Activated T-helper 1 cell treated with anti-CD3 and anti-CD28 coated beads, Interleukin-12 subunit alpha, Interleukin-12 subunit beta, Interleukin-2, Interleukin-4 antibody, amounts not matched to agents 30 ng/mL and 10 ng/mL and 1 ng/mL, durations not matched to agents 14 hours and 24 hours and 36 hours (primary cell): ENCODE measurements at regions of chr3 and their contacts with region 1.

Region 1: DNA sequence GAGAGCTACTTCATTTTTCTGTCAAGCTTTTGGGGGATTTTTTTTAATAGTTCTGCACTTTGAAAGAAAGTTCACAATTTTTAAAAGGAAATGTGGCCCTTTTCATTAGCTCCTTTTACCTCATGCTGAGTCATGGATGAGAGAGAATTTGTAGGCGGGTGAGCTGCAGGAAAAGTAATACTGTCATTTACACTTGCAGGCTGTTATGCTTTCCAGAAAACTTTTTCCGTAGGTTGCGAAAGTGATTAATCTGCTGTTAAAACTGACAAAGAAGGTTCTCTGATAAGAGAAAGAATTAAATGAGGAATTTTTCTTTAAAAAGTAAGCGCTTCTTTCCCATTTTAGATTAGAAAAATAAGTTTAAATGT is 430.2 kb downstream of the LPP start:
- DNase-seq: no peak
- H3K4me3 Mint-ChIP-seq: no peak overlapping the region
- H3K27ac Mint-ChIP-seq: no peak overlapping the region
- H3K4me1 Mint-ChIP-seq: no peaks in the 10 kb centered on the region
- H3K27me3 Mint-ChIP-seq: no peaks in the 10 kb centered on the region

Region 2: GRCh38 chr3:188257384-188258026 is 326.6 kb before region 1 on chr3:
- intact Hi-C with region 1: loop called (anchors 2 kb)
- DNase-seq: no peak
- H3K4me3 Mint-ChIP-seq: no peak overlapping the region
- H3K27ac Mint-ChIP-seq: peak overlapping the region; percentile 63
- H3K4me1 Mint-ChIP-seq: peaks cover 62% of the 10 kb centered on the region
- H3K27me3 Mint-ChIP-seq: peaks cover 2% of the 10 kb centered on the region

Region 3: DNA sequence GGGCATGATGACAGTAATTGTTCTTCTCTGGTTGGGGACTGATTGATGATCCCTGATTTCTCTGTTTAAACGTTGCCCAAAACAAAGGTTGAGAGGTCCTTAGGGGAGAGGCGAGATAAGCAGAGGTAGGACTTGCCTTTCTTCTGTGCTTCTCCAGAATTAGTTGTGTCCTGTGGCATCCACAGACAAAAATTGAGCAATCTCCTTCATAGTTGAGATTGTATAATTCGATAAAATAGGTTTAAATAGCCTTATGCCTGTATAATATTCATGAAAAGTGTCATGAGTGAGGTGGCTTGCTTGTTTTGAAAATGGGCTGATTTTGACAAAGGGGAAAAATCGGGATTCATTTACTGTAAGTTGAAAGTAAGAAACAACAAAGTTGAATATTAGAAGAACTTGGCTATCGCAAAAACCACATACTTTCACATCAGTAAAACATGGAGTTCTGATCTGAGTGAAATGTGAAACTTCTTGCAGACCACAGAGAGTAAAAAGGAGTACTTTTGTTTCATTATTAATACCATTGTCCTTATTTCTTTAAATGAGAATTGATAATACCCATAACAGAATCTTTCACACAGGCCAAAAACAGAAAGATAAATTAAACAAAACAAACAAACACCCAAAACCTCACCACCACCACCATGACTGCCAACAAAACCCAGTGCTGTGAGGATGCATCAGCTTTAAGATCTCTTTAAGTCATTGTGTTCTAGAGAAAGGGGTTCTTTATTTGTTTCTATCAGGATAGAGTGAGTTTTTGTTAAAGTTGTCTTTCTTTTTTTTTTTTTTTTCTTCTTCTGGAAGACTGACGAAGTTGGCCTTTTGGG is 274.5 kb before region 1 on chr3:
- intact Hi-C with region 1: loop called (anchors 1 kb)
- DNase-seq: no peak
- H3K4me3 Mint-ChIP-seq: peak overlapping the region; percentile 40
- H3K27ac Mint-ChIP-seq: peak overlapping the region; percentile 64
- H3K4me1 Mint-ChIP-seq: peaks cover 35% of the 10 kb centered on the region
- H3K27me3 Mint-ChIP-seq: peaks cover 9% of the 10 kb centered on the region

Region 4: DNA sequence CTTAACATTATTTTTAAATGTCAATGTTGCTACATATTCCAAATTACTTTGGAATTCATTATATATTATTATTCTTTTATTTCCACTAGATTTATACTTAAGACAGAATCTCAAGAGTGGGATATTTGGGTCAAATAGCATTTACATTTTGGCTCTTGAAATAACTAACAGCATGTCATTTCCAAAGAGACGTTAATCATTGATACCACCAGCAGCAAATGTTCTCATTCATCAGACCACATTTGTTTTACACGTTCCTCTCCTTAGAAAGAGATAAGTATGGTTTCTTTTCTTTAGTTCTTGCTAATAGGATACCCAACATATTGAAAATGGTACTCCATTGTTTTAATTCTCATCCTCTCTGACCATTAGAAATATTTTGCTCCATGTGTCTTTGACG is 200.4 kb before region 1 on chr3:
- intact Hi-C with region 1: no loop called
- DNase-seq: no peak
- H3K4me3 Mint-ChIP-seq: no peak overlapping the region
- H3K27ac Mint-ChIP-seq: no peak overlapping the region
- H3K4me1 Mint-ChIP-seq: peaks cover 29% of the 10 kb centered on the region
- H3K27me3 Mint-ChIP-seq: peaks cover 1% of the 10 kb centered on the region

Region 5: GRCh38 chr3:188553569-188553968 is 30.6 kb before region 1 on chr3:
- intact Hi-C with region 1: loop called (anchors 2 kb)
- DNase-seq: peak; percentile 27
- H3K4me3 Mint-ChIP-seq: no peak overlapping the region
- H3K27ac Mint-ChIP-seq: no peak overlapping the region
- H3K4me1 Mint-ChIP-seq: peaks cover 7% of the 10 kb centered on the region
- H3K27me3 Mint-ChIP-seq: no peaks in the 10 kb centered on the region

Region 6: GRCh38 chr3:188607805-188608315 is 23.7 kb after region 1 on chr3:
- intact Hi-C with region 1: loop called (anchors 2 kb)
- DNase-seq: no peak
- H3K4me3 Mint-ChIP-seq: no peak overlapping the region
- H3K27ac Mint-ChIP-seq: no peak overlapping the region
- H3K4me1 Mint-ChIP-seq: no peaks in the 10 kb centered on the region
- H3K27me3 Mint-ChIP-seq: no peaks in the 10 kb centered on the region

Region 7: DNA sequence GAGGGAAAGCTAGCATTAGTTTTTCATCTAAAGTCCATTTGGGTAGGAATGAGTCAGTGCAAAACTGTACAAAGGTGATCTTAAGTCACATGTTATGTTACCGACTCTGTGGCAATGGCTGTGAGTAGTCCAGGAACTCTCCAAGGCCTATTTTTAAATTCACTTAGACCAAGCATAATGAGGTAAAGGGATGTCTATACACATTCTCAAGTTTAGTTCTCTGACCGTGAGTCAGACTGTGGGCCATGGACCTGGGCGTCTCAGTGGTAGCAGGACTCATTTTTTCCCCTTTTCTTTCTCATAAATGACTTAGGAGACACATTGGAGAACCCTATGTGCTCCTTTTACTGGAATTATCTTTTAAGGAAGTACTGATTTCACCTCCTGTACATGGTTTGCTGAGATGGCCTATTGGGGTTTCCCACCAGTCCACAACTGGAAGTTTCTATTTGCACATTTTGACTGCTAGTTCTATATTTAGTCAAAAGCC is 98.9 kb after region 1 on chr3:
- intact Hi-C with region 1: loop called (anchors 2 kb)
- DNase-seq: no peak
- H3K4me3 Mint-ChIP-seq: no peak overlapping the region
- H3K27ac Mint-ChIP-seq: peak overlapping the region; percentile 74
- H3K4me1 Mint-ChIP-seq: peaks cover 28% of the 10 kb centered on the region
- H3K27me3 Mint-ChIP-seq: no peaks in the 10 kb centered on the region

Region 8: DNA sequence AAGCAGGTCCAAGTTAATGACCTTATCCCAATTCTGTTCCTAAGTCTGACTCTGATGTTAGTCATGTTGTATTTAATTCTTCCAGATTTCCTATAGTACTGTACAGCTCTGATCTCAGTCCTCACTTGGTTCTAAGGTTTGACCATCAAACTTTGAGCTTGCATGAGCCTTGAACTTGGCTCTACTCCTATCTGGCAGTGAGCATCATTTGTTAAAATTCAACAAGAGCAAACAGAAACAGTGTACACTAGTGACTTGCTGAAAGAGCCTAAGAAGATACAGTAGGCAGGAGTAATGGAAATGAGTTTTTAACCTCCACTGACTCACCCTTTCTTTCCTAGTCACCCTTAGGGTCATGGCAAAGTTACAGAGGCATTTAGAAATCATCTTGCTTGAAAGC is 136.5 kb after region 1 on chr3:
- intact Hi-C with region 1: loop called (anchors 1 kb)
- DNase-seq: no peak
- H3K4me3 Mint-ChIP-seq: no peak overlapping the region
- H3K27ac Mint-ChIP-seq: no peak overlapping the region
- H3K4me1 Mint-ChIP-seq: peaks cover 35% of the 10 kb centered on the region
- H3K27me3 Mint-ChIP-seq: peaks cover 2% of the 10 kb centered on the region